A549 (cell line): ENCODE measurements at regions of chr17 and their contacts with region 1.

Region 1: DNA sequence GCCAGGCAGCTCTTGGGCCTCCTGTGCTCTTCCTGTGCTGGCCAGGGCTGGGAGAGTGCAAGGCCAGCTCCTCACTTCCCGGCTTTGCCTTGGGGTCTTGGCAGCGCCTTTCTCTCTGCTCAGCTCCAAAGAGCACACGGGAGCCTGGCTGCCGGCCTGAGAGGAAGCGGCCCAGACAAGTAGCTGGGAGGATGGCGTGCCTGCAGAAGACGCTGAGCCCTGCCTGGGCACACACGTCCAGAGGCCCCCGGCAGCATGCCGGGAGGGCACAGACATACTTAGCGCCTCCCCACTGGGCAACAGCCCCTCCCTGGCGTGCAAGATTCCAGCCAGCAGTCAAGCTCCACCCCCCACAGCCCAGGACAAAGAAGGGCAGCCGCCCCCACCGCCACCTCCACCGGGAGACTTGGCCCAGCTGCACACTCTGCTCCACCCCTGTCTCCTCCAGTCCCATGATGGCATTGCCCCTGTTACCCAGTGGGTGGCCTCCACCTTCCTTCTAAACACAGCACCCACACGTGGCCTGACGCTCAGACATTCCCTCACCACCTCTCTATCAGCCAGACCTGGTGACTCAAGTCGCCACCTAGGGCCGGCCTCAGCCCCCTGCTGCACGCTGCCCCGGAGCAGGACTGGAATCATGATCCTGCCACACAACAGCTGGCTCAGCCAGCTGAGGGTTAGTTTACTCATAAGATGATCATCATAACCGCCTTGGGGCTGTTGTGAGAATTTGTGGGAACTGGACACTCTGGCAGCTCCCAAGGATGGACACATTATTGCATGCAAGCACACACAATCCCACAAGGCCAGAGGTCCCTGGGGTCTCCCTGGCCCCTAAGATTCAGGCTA is 12.4 kb downstream of the SGCA start:
- DNase-seq: peak; percentile 98
- ATAC-seq: peak; percentile 86 to 93
- H3K4me3 ChIP-seq: no peak overlapping the region
- H3K27ac ChIP-seq: peak overlapping the region; percentile 90 to 95
- H3K4me1 ChIP-seq: peaks cover 61% of the 10 kb centered on the region
- CTCF ChIP-seq: peak; percentile 86
- EP300 ChIP-seq: peak; percentile 67 to 71; a peak in 3 of 5 replicates
- POLR2A ChIP-seq: peak; percentile 73
- RAD21 ChIP-seq: peak; percentile 62 to 69

Region 2: DNA sequence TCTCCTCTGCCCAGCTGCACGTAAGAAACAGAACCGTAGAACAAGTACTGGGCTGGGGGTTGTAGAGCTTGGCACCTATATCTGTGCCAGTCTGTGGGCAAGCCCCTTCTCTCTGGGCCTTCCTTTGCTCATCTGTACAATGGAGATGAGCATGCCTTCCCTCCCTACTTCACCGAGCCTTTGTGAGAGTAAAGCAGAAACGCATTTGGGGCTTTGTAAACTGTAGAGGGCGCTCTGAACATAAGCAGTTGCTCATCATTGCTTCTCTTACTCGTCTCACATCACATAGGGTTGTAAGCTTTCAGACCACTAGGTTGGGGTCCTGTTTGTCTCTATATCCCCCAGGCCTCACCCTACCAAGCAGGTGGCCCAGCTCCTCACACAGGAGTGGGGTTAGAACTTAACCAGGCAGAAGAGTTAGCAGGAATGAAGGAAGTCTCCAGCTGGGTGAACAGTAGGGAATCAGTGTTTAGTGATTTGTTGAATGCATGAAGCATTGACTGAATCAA is 63.3 kb before region 1 on chr17:
- CTCF ChIA-PET with region 1: interaction called, 20 read pairs
- POLR2A ChIA-PET with region 1: no interaction called
- DNase-seq: peak; percentile 66 to 82
- ATAC-seq: peak; percentile 17 to 69; a peak in 4 of 6 replicates
- H3K4me3 ChIP-seq: no peak overlapping the region
- H3K27ac ChIP-seq: no peak overlapping the region
- H3K4me1 ChIP-seq: peaks cover 10% of the 10 kb centered on the region; the same call in 1 of the 3 replicates
- CTCF ChIP-seq: peak; percentile 76
- EP300 ChIP-seq: no peak
- POLR2A ChIP-seq: no peak
- RAD21 ChIP-seq: peak; percentile 66 to 83

Region 3: DNA sequence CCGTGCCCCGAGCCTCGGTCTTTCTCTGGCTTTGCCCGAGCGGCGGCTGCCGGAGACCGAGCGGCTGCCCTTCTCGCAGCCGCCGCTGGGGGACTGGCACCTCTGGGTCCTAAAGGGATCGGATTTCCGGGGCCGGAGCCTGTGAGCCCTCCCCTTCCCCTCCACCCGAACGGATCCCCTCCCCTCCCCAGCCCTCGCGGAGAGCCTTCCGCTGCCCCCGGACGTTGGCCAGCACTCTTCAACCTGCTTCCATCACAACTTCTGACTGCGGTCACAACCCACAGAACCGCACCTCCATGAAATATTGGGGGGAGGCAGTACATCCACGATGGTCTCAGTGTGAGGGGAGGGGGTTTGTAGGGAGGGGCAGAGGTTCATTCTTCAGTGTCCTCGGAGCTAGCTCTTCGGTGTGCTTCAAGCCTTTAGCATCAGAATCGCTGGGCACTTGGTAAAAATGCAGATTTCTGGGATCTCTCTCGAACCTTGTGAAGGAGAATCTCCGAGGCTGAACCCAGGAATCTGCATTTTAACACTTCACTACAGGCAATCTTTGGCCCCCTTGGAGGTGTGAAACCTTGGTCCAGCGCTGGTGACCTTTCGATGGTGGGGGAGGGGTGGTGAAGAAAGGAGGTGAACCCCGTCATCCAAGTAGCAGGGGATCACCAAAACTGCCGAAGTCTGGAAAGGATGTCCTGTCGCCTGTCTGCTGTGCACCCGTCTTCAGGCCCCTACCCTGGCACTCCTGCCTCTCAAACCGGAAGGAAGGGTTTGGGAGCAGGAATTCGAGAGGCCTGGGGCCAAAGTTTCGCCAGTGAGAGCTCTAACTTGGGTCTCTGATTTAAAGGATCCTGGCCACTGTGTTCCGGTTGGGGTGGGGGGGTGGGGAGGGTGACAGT is 26.9 kb before region 1 on chr17:
- CTCF ChIA-PET with region 1: interaction called, 424 read pairs
- POLR2A ChIA-PET with region 1: interaction called, 14 read pairs
- DNase-seq: peak; percentile 96 to 97
- ATAC-seq: peak; percentile 71 to 78
- H3K4me3 ChIP-seq: peak overlapping the region; percentile 86
- H3K27ac ChIP-seq: peak overlapping the region; percentile 96 to 98
- H3K4me1 ChIP-seq: peaks cover 49% of the 10 kb centered on the region
- CTCF ChIP-seq: peak; percentile 36; the same call in 1 of the 3 replicates
- EP300 ChIP-seq: no peak
- POLR2A ChIP-seq: peak; percentile 73
- RAD21 ChIP-seq: no peak; a peak in 1 of 5 replicates

Region 4: DNA sequence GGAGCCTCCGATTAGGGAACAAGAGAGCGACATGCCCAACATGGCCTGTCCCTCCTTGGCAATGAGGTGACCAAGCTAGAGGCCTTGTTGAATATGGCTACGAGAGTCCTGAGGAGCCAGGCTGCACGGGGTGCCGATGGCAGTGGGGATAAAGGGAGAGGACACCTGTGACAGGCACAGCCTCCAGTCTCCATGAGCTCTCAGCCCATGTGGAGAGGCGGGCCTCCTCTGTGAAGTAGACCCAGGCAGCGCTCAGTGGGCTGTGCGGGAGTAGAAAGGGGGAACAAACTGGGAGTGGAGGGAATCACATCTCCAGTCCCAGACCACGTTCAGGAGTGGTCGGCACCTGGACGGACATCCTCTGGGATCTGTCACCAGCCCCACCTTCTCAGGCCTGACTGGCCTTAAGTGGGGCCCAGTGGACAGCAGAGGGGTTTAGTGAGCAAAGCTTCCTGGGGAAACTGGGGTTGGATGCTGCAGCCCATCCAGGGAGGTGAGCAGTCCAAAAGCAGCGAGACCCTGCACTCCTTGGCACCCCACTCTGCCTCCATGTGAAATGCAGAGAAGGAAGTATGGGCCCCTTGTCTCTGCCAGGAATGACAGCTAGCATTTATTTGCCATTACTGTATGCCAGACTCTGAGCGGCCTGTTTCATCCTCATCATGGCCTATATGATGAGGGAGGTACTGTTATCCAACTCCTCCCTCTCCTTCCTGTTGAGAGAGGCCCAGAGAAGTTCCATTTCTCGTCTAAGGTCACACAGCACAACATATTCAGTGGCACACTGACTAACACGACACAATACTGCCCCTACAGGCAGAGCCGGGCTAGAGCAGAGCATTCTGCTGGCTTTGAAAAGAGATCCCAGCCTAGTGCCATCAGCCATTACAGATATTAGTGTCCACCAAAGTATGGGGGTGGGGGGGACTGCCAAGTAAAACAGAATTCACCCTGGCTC is 91.5 kb after region 1 on chr17:
- CTCF ChIA-PET with region 1: interaction called, 12 read pairs
- POLR2A ChIA-PET with region 1: no interaction called
- DNase-seq: peak; percentile 79 to 91
- ATAC-seq: peak; percentile 58 to 66
- H3K4me3 ChIP-seq: no peak overlapping the region
- H3K27ac ChIP-seq: peak overlapping the region in 1 of 2 experiments; percentile 36; a peak in 3 of 6 replicates
- H3K4me1 ChIP-seq: peaks cover 47% of the 10 kb centered on the region
- CTCF ChIP-seq: peak; percentile 93
- EP300 ChIP-seq: no peak
- POLR2A ChIP-seq: no peak
- RAD21 ChIP-seq: peak; percentile 79 to 90